ENCODE measurements at regions of chr6 and their contacts with region 1.

Region 1: DNA sequence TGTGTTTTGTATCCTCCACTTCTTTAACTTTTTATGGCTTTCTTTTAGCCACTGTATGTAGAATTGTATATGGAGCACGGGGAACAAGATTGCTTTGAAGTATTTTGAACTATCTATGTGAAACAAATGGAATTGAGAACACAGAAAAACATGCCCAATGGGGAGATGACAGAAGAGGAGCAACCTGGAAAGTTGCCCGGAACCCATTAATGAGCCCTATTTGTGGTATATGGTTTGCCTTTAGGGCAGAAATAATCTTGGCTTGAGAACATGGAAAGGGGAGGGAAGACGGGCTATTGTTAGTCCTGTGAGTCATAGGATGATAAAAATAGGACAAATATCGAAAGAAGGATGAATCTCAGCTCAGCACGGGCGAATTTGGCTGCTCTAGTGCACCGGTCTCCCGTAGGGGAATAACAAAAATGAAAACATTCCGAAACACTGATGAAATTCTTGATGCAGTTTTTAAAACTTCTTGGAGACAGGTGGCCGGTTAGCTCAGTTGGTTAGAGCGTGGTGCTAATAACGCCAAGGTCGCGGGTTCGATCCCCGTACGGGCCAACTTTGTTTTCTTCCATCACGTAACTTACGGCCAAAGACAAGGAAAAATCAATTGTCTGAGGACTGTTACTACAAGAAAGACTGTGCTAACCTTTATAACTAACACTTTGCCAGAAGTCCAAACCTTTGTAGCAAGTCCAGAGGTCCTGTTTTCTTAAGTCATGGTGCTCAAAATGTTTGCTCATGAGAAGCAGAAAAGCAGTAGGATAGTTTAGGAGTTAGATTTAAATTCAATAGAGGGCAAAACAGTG is 15.7 kb downstream of the HMGN4 start:
- DNase-seq: peak; percentile 66 to 85 (median 72)
- ATAC-seq: peak; percentile 85 to 93 (median 88)
- H3K4me3 ChIP-seq: peak overlapping the region; percentile 26 to 66 (median 60)
- H3K27ac ChIP-seq: peak overlapping the region; percentile 18 to 90 (median 84)
- H3K4me1 ChIP-seq: peaks cover 0 to 33% (median 10%) of the 10 kb centered on the region in 12 donors
- H3K27me3 ChIP-seq: no peaks in the 10 kb centered on the region
- CTCF ChIP-seq: no peak
- POLR2A ChIP-seq: no peak

Region 2: DNA sequence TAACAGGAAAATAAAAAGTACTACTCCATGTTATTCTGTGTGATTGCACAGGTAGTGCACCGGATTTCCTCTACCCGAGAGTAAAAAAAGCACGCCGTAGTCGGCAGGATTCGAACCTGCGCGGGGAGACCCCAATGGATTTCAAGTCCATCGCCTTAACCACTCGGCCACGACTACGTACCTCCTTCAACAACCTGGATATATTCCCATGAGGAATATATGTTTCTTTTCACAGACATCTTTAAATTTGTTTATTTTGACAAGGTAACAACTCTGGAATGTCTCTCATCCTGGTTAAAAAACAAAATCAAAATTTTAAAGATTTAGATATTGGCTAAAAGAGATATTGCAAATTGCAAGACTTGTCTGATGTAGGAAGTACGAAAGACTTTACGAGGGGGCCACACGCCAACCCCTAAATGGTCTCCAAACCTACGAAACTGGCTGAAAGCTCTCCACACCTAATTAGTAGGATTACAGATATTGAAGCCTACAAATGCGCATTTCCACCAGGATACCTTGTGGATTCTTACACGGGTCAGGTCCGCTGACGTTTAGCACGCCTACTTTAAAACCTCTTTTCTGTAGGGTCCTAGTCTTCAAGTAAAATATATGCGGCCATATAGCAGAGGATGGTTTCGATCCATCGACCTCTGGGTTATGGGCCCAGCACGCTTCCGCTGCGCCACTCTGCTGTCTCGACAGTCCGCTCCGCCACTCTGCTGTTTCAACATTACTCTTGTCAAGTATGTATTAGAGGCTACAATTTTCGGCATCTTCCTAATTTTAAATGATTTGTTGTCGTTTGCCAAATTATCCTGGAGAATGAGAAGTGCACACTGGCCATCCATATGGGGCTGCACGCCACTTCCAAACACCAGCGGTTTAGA is 241.1 kb before region 1 on chr6:
- intact Hi-C with region 1: loop called in 1 of 10 experiments (anchors 10 kb)
- DNase-seq: peak; percentile 60 to 80 (median 75)
- ATAC-seq: peak; percentile 77 to 93 (median 88)
- H3K4me3 ChIP-seq: peak overlapping the region; percentile 12 to 66 (median 50)
- H3K27ac ChIP-seq: peak overlapping the region in 9 of 12 donors; percentile 4 to 67 (median 27)
- H3K4me1 ChIP-seq: peaks cover 0 to 27% (median 7%) of the 10 kb centered on the region in 12 donors
- H3K27me3 ChIP-seq: peaks cover 0 to 11% (median 0%) of the 10 kb centered on the region in 9 donors
- CTCF ChIP-seq: no peak
- POLR2A ChIP-seq: no peak

Region 3: DNA sequence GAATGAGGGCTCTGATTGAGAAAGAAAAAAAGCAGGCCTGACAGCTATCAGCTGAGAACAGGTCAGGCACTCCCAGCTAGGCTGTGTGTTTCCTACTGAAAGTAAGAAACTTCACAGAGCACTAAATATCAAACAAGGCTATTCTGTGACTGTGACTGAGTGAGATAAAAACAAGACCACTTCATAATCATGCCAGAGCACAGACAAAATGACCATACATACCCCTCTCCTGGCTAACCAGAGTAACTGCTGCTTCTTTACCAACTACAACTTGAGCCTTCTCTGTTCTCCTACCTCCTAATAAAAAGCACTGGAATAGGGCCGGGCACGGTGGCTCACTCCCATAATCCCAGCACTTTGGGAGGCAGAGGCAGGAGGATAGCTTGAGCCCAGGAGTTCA is 60.6 kb before region 1 on chr6:
- intact Hi-C with region 1: no loop called
- DNase-seq: no peak
- ATAC-seq: no peak
- H3K4me3 ChIP-seq: no peak overlapping the region
- H3K27ac ChIP-seq: no peak overlapping the region
- H3K4me1 ChIP-seq: no peaks in the 10 kb centered on the region
- H3K27me3 ChIP-seq: peaks cover 0 to 7% (median 0%) of the 10 kb centered on the region in 9 donors
- CTCF ChIP-seq: peak in 1 of 12 donors; percentile 17
- POLR2A ChIP-seq: no peak

Region 4: GRCh38 chr6:26537846-26538571 is 15.8 kb before region 1 on chr6 and contains the start of gene HMGN4:
- intact Hi-C with region 1: loop called in 6 of 10 experiments (anchors 1 to 2 kb)
- DNase-seq: peak; percentile 82 to 91 (median 87)
- ATAC-seq: peak; percentile 86 to 90 (median 90)
- H3K4me3 ChIP-seq: peak within 1 kb of the TSS; percentile 58 to 94 (median 76)
- H3K27ac ChIP-seq: peak within 1 kb of the TSS; percentile 75 to 96 (median 92)
- H3K4me1 ChIP-seq: peaks cover 0 to 48% (median 25%) of the 10 kb centered on the region in 12 donors
- H3K27me3 ChIP-seq: no peaks in the 10 kb centered on the region
- CTCF ChIP-seq: peak in 3 of 12 donors; percentile 19 to 40 (median 30)
- POLR2A ChIP-seq: peak in 1 of 2 donors; percentile 56
- total RNA-seq, gene HMGN4: 22.4 to 34.7 (median 32.1) TPM

Region 5: GRCh38 chr6:26651133-26651781 is 97.4 kb after region 1 on chr6:
- intact Hi-C with region 1: no loop called
- DNase-seq: no peak
- ATAC-seq: no peak
- H3K4me3 ChIP-seq: no peak overlapping the region
- H3K27ac ChIP-seq: no peak overlapping the region
- H3K4me1 ChIP-seq: peaks cover 0 to 11% (median 0%) of the 10 kb centered on the region in 12 donors
- H3K27me3 ChIP-seq: no peaks in the 10 kb centered on the region
- CTCF ChIP-seq: no peak
- POLR2A ChIP-seq: no peak

Region 6: DNA sequence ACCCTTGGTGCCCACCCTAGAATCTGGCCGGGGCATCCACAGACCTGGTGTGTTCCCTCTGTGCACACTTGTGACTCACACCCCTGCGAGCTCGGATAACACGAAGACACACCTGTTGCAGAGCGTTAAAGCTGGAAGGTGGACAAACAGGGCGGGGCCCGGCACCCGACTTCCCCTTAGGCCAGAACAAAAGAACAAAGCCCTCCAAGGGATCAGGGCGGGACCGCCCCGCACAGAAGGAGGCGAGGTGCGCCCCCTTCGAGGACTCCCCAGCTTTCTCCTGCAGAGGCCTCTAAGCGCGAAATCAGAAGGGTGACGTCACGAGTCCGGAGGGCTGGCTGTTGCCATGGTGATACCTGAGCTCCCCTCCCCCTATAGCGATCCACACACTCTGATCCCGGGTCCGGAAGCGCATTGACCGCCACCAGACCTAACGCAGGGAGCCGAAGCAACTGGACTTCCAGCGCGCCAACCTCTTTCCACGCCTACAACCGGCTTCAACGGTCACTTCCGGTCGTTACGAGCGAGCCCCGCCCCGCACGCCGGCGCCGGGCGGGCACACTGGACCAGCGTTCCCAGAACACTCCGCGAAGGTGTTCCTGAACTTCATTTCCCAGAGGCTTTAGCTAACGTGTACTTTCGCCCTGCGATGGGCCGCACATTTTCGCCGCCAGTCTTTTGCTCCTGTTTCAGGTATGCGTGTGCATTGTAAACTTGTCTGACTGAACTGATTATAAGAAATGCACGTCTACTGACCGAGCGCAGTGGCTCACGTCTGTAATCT is 919.0 kb after region 1 on chr6 and contains the start of gene ZNF184:
- intact Hi-C with region 1: loop called in 1 of 10 experiments (anchors 10 kb)
- DNase-seq: peak; percentile 95 to 96 (median 96)
- ATAC-seq: peak; percentile 99 to 100 (median 100)
- H3K4me3 ChIP-seq: peak within 1 kb of the TSS; percentile 52 to 99 (median 86)
- H3K27ac ChIP-seq: peak within 1 kb of the TSS; percentile 34 to 92 (median 86)
- H3K4me1 ChIP-seq: peaks cover 0 to 37% (median 19%) of the 10 kb centered on the region in 12 donors
- H3K27me3 ChIP-seq: no peaks in the 10 kb centered on the region
- CTCF ChIP-seq: peak in 3 of 12 donors; percentile 2 to 29 (median 24)
- POLR2A ChIP-seq: peak in 1 of 2 donors; percentile 78
- total RNA-seq, gene ZNF184: 3.2 to 6.5 (median 4.0) TPM